ENCODE measurements at regions of chr7 and their contacts with region 1.

Region 1: DNA sequence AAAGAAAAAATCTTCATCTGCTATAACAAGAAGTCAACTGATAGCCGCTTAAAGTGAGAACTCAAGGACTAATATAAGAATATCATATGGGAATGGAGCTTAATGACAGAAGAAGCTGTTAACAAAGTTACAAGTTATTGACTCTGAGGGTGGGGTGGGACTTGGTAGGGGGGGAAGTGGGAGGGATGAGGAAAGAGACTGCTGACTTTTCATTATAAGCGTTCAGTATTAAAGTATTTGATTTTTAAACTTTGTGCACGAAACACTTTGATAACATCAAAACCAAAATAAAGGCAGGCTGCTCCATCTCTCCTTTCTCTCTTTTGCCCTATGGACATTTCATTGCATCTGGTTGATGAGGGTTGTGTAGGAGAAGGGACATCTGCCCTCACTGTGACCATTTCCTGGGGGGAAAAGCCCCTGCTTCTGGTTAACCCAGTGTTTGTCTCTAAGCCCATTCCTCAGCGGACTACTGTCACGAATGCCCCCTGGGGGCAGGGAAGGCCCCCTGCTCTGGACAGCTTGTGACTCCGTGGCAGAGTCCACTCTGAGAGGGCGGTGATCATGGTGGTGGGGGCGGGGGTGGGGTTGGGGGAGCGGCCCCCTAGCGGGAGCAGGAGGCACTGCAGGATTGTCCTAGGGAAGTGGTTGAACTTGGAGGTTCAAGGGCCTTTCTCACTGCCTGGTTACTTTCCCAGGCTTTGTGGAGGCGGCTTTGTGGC is 17.4 kb downstream of the SLC13A4 start:
- DNase-seq: peak; percentile 24
- H3K4me3 Mint-ChIP-seq: no peak overlapping the region
- H3K27ac Mint-ChIP-seq: no peak overlapping the region
- H3K4me1 Mint-ChIP-seq: peaks cover 14% of the 10 kb centered on the region
- H3K27me3 Mint-ChIP-seq: no peaks in the 10 kb centered on the region
- CTCF ChIP-seq: peak; percentile 80

Region 2: GRCh38 chr7:135151533-135151932 is 559.0 kb before region 1 on chr7:
- CTCF ChIA-PET with region 1: no interaction called
- POLR2A ChIA-PET with region 1: no interaction called
- intact Hi-C with region 1: no loop called
- DNase-seq: no peak
- H3K4me3 Mint-ChIP-seq: no peak overlapping the region
- H3K27ac Mint-ChIP-seq: no peak overlapping the region
- H3K4me1 Mint-ChIP-seq: peaks cover 7% of the 10 kb centered on the region
- H3K27me3 Mint-ChIP-seq: no peaks in the 10 kb centered on the region
- CTCF ChIP-seq: no peak

Region 3: GRCh38 chr7:135475521-135475920 is 235.1 kb before region 1 on chr7:
- CTCF ChIA-PET with region 1: no interaction called
- POLR2A ChIA-PET with region 1: no interaction called
- intact Hi-C with region 1: no loop called
- DNase-seq: no peak
- H3K4me3 Mint-ChIP-seq: no peak overlapping the region
- H3K27ac Mint-ChIP-seq: no peak overlapping the region
- H3K4me1 Mint-ChIP-seq: peaks cover 6% of the 10 kb centered on the region
- H3K27me3 Mint-ChIP-seq: no peaks in the 10 kb centered on the region
- CTCF ChIP-seq: no peak

Region 4: GRCh38 chr7:135672560-135673359 is 37.8 kb before region 1 on chr7:
- CTCF ChIA-PET with region 1: interaction called, 33 read pairs
- POLR2A ChIA-PET with region 1: interaction called, 6 read pairs
- intact Hi-C with region 1: loop called (anchors 5 kb)
- DNase-seq: peak; percentile 77
- H3K4me3 Mint-ChIP-seq: no peak overlapping the region
- H3K27ac Mint-ChIP-seq: peak overlapping the region; percentile 46
- H3K4me1 Mint-ChIP-seq: peaks cover 37% of the 10 kb centered on the region
- H3K27me3 Mint-ChIP-seq: no peaks in the 10 kb centered on the region
- CTCF ChIP-seq: peak; percentile 67

Region 5: DNA sequence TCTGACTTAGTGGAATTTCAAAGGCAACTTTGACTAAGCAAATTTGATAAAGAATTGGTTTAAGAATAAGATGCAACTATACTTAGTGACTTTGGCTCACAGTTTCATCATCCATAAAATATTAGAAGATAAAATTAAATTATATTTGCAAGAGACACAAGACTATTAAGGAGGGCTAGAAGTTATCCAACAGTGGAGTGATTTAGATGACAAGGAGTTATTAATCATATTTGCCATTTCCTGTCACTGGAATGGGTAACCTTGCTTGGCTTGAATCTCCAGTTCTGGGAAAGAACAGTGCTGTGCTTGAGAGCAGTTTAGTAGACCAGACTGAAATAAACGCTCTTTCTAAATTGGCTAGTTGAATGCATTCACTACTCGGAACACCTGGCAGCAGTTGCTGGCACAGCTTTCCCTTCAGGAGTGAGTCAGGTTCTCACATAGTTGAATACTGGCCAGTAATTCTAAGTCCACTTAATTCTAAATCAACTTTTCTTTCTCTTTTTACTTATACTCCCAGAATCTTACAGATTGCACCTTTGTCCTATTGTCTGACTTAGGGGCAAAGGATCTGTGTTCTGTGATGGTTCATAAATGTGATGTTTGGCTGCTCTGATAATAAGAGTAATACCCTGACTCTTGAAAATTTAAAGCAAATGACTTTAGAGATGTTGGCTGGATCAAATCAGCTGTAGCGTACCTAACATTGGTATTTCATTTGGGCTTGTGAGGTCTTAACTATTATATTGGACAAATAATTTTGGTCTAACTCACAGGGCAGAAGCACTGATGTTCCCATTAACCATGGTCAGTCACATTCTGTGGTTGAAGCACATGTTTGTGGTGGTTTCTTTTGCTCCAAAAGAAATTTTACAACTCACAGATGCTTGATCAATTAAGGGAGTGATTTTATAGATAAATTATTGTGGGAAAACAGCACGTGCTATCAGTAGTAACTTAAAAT is 31.7 kb before region 1 on chr7:
- CTCF ChIA-PET with region 1: interaction called, 33 read pairs
- POLR2A ChIA-PET with region 1: interaction called, 12 read pairs
- intact Hi-C with region 1: loop called (anchors 5 kb)
- DNase-seq: peak; percentile 85
- H3K4me3 Mint-ChIP-seq: peak overlapping the region; percentile 44
- H3K27ac Mint-ChIP-seq: peak overlapping the region; percentile 73
- H3K4me1 Mint-ChIP-seq: peaks cover 35% of the 10 kb centered on the region
- H3K27me3 Mint-ChIP-seq: no peaks in the 10 kb centered on the region
- CTCF ChIP-seq: no peak

Region 6: DNA sequence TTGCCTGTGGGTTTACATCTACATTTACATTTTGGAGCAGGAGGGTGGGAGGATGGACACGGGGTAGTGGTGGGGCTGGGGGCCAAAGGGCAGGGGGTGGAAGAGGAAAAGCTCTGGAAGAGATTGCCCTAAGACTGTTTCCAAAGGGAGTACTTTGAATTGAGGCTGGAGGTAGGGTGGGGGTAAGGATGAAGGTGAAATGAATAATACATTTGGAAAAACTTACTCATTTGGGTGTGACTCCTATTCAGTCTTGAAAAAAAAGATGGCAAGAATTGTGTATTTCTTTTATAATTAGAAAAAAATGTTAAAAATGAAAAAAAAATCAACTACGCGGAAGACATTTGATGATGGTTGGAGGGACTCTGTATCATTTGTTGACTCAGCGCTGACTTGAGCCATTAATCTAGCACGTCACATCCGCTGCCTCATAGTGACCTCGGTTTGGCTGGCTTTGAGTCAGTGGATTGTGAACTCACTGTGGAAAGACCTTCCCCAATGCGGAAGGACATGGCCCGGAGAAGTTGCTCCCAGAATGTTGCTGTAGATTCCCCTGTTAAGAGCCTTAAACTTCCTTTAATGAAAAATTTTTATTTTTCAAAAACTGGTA is 35.2 kb after region 1 on chr7:
- CTCF ChIA-PET with region 1: interaction called, 6 read pairs
- POLR2A ChIA-PET with region 1: interaction called, 12 read pairs
- intact Hi-C with region 1: loop called (anchors 5 kb)
- DNase-seq: peak; percentile 84
- H3K4me3 Mint-ChIP-seq: peak overlapping the region; percentile 3
- H3K27ac Mint-ChIP-seq: peak overlapping the region; percentile 86
- H3K4me1 Mint-ChIP-seq: peaks cover 30% of the 10 kb centered on the region
- H3K27me3 Mint-ChIP-seq: no peaks in the 10 kb centered on the region
- CTCF ChIP-seq: no peak

Measured in MCF 10A (cell line).